HAP-1 (cell line): ENCODE measurements at regions of chr7 and their contacts with region 1.

Region 1: DNA sequence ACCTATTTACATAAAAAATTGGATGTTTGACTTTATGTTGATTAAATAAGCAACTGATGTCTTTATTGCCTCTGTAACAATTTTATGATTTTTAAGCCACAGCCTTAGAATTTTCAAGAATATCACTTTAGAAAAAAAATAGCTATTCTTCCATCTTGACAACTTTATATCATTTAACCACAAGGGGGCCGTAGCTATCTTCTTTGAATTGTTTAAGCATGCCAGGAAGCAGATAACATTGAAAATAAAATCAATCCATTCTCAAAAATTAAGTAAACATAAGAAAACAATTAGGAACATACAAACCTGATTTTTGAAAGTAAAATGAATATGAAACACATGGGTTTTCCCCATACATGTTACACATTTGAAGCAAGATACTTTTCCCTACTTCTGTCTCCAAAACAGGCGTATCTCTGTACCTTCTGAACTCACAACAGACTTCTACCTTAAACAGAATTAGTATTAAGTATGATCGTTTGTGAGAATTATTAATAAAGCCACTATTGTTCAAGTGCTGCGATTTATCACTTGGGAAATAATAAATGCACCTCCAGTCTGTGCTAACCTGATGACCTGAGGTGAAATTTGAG is 209.0 kb downstream of the CACNA2D1 start:
- DNase-seq: peak in 1 of 2 experiments; percentile 55
- H3K4me3 ChIP-seq: no peak overlapping the region
- H3K4me1 ChIP-seq: 0 out of 2 replicates have a peak, but pooled peaks cover 2% of the 10 kb centered on the region
- H3K27me3 ChIP-seq: no peaks in the 10 kb centered on the region

Region 2: GRCh38 chr7:82284936-82285519 is 50.5 kb after region 1 on chr7:
- in situ Hi-C with region 1: no loop called
- DNase-seq: no peak
- H3K4me3 ChIP-seq: no peak overlapping the region
- H3K4me1 ChIP-seq: peaks cover 18% of the 10 kb centered on the region
- H3K27me3 ChIP-seq: no peaks in the 10 kb centered on the region

Region 3: DNA sequence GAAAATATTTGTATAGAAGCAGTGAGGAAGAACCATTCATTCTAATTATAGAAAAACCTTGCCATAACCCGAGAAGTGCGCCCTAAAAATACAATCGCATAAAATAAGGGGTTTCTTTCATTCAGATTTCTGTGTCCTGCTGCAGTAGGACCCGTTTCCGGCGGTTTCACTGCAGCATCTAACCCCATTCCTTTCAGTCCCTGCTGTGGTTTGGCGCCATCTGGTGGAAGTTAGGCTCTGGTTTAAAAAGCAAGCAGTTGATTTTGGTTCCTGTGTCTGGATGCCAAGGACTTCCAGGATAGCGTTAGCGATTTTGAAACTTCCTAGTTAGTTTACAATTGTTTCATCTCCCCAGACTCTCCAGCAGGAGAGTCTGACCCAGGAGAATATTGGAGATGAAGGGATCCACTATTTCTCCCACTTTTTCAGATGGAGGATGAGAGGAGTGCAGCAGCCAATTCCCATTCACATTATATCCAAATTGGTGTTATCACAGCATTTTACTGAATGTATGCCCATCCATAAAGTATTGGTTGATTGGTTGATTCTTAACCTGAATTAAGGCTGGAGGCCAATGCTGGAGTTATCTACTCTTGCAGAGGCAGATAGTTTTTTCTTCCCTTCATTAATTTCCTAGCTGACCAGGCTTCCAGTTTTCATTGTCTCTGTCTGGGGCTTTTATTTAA is 337.8 kb after region 1 on chr7:
- in situ Hi-C with region 1: loop called (anchors 10 kb)
- DNase-seq: peak; percentile 80 to 94
- H3K4me3 ChIP-seq: no peak overlapping the region
- H3K4me1 ChIP-seq: no peaks in the 10 kb centered on the region
- H3K27me3 ChIP-seq: 0 out of 2 replicates have a peak, but pooled peaks cover 3% of the 10 kb centered on the region